HEK293 (cell line): ENCODE measurements at regions of chr6 and their contacts with region 1.

Region 1: DNA sequence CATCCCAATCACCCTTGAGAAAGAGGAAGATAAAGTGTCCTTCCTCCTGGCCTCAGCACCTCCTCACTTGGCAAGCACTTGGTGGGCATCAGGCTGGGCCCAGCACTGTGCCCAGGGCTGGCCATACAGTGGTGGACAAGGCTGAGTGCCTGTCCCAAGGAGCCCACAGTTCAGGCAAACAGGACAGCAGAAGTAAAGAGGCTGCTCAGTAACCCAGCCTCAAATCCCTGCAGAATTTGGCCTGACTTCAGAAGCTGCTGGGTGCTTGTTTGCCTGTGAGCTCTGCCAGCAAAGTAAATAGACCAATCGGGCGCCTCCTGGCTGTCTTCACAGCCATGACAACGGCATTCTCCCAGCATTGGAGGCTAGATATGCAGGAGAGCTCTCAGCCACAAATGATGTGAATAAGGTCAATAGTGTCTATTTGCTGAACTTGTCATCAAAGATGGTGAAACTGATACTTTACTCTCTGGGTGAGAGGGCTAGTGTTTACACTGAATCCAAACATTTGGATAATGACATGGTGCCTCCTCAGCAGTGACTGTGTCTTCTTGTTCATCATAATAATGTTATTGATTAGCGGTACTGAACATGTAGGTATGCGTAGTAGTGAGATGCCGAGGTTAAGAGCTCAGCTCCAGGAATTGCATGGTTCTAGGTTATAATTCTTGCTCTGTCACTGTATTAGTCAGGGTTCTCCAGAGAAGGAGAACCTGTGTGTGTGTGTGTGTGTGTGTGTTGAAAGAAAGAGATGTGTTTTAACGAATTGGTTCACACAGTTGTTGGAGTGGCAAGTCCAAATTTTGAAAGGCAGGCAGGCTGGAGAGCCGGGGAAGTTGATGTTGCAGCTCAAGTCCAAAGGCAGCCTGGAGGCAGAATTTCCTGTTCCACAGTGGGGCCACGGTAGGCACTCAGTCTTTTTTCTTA is 36.8 kb upstream of the FANCE start:
- H3K4me3 ChIP-seq: no peak overlapping the region
- H3K27ac ChIP-seq: no peak overlapping the region; the same call in 1 of the 2 replicates
- H3K4me1 ChIP-seq: peaks cover 4% of the 10 kb centered on the region
- CTCF ChIP-seq: peak; percentile 53

Region 2: GRCh38 chr6:35297601-35298481 is 117.5 kb before region 1 on chr6 and contains the start of gene DEF6:
- CTCF ChIA-PET with region 1: interaction called, 12 read pairs
- POLR2A ChIA-PET with region 1: no interaction called
- H3K4me3 ChIP-seq: no peak within 1 kb of the TSS
- H3K27ac ChIP-seq: no peak within 1 kb of the TSS
- H3K4me1 ChIP-seq: no peaks in the 10 kb centered on the region
- CTCF ChIP-seq: 0 out of 2 replicates have a peak, but pooled peaks have one; percentile 45

Region 3: DNA sequence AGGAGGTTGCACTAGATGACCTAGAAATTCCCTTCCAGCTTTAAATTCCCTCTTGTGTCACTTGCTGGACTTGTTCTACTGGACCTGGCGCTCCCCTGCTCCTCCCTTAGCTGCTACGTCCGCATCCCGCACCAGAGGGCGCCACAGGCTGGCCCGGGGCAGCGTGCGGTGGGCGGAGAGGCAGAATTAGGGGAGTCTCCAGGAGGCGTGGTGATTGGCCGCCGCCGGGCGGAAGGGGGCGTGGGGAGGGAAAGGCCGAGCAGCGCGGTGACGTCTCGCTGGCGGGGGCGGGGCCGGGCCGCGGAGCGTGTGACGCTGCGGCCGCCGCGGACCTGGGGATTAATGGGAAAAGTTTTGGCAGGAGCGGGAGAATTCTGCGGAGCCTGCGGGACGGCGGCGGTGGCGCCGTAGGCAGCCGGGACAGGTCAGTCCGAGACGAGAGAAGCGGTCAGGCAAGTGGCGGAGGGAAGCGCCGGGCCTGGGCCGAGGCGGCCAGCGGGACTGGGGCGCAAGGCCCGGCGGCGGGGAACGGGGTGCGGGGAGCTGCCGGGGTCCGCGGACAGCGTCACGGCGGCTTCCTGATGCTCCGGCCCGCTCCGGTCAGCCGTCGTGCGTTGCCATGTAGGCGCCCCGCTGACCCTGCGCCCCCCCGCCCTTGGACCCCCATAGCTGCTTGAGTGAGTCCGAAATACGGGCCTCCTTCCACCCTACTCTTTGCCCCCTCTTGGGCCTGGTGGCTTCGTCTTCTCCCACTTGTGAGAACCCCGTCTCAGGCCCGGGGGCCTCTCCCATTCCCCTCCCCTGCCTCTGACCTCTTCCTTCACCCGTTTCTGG is 72.9 kb before region 1 on chr6 and contains the start of gene PPARD:
- CTCF ChIA-PET with region 1: interaction called, 42 read pairs
- POLR2A ChIA-PET with region 1: interaction called, 10 read pairs
- H3K4me3 ChIP-seq: peak within 1 kb of the TSS; percentile 65
- H3K27ac ChIP-seq: no peak within 1 kb of the TSS; the same call in 1 of the 2 replicates
- H3K4me1 ChIP-seq: no peaks in the 10 kb centered on the region; the same call in 1 of the 2 replicates
- CTCF ChIP-seq: peak; percentile 97

Region 4: DNA sequence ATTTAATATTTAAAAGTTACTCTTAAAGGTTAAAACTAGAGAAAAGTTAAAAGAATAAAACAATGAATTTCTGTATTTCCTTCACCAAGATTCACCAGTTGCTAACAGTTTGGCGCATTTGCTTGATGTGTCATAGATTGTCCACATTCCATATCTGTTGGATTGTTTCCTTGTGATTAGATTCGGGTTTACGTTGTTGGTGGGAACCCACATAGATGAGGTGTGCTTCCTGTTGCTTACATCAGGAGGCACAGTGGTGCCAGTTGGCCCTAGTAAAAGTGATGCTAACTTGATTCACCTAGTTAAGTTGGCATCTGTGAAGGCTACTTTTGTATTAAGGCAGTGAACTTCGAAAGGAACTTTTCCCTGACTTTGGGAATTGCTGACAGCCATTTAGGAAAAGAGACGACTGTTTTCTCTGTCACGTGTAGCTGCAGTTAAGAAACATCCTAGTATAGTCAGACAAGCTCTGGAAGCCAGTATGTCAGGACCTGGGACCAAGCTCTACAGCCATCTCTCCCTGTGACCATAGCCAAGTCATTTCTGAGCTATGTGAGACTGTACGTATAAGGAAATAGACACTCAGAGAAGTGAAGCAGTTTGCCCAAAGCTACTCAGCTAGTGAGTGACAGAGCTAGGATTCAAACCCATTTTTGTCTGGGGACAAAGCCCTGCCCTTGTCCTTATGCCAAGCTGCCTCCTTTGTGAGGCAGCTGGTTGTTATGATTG is 23.9 kb before region 1 on chr6:
- CTCF ChIA-PET with region 1: interaction called, 10 read pairs
- POLR2A ChIA-PET with region 1: interaction called, 6 read pairs
- H3K4me3 ChIP-seq: no peak overlapping the region
- H3K27ac ChIP-seq: no peak overlapping the region
- H3K4me1 ChIP-seq: peaks cover 4% of the 10 kb centered on the region; the same call in 1 of the 2 replicates
- CTCF ChIP-seq: no peak

Region 5: GRCh38 chr6:35402136-35402855 is 13.0 kb before region 1 on chr6:
- CTCF ChIA-PET with region 1: interaction called, 28 read pairs
- POLR2A ChIA-PET with region 1: interaction called, 6 read pairs
- H3K4me3 ChIP-seq: no peak overlapping the region
- H3K27ac ChIP-seq: no peak overlapping the region
- H3K4me1 ChIP-seq: no peaks in the 10 kb centered on the region
- CTCF ChIP-seq: no peak

Region 6: DNA sequence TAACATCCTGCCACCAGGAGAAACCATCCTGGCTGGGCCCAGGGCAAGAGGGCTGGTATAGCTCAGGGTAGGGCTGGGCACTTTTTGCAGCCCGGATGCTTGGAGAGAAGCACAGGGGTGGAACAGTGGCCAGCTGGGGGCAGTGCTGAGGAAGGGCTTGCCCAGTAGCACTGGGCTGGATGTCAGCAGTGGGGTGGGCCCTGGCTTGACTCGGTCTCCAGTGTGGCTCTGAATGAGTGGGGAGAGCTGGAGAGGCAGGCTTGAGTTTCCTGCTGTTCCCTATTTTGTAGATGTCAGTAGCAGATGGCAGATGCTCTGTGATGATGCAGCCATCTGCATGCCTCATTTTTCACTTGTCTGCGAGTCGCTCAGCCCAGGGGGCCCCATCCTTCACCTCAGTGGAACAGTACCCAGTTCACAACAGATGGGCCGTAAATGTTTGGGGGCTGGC is 153.7 kb after region 1 on chr6:
- CTCF ChIA-PET with region 1: no interaction called
- POLR2A ChIA-PET with region 1: no interaction called
- H3K4me3 ChIP-seq: no peak overlapping the region
- H3K27ac ChIP-seq: no peak overlapping the region
- H3K4me1 ChIP-seq: peaks cover 1% of the 10 kb centered on the region; the same call in 1 of the 2 replicates
- CTCF ChIP-seq: no peak; the same call in 1 of the 2 replicates